ENCODE measurements at regions of chr9 and their contacts with region 1.

Region 1: DNA sequence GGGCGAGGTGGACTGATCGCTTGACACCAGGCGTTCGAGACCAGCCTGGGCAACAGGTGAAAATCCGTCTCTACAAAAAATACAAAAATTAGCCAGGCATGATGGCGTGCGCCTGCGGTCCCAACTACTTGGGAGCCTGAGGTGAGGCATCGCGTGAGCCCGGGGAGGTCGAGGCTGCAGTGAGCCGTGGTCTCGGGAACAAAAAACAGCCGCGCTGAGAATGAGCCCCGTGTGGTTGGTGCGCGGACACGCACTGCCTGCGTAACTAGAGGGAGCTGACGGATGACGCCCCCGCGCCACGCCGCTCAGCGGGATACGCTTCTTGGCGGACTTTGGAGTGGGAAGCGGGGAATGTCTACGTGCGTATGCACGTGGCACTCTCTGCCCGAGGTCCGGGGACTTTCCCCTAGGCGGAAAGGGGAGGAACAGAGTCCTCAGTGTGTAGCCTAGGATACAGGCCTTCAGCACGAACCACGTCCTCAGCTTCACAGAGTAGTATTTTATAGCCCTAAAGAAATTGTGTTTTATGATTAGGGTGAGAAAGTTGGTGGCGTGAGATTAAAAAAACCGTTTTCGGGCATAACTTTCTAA is at the start of gene RMRP:
- DNase-seq: peak; percentile 99
- H3K4me3 Mint-ChIP-seq: peak within 1 kb of the TSS; percentile 62
- H3K27ac Mint-ChIP-seq: peak within 1 kb of the TSS; percentile 100
- H3K4me1 Mint-ChIP-seq: peaks cover 21% of the 10 kb centered on the region
- H3K27me3 Mint-ChIP-seq: no peaks in the 10 kb centered on the region
- CTCF ChIP-seq: no peak
- total RNA-seq, gene RMRP: 13,245 and 17,503 TPM in 2 replicates

Region 2: DNA sequence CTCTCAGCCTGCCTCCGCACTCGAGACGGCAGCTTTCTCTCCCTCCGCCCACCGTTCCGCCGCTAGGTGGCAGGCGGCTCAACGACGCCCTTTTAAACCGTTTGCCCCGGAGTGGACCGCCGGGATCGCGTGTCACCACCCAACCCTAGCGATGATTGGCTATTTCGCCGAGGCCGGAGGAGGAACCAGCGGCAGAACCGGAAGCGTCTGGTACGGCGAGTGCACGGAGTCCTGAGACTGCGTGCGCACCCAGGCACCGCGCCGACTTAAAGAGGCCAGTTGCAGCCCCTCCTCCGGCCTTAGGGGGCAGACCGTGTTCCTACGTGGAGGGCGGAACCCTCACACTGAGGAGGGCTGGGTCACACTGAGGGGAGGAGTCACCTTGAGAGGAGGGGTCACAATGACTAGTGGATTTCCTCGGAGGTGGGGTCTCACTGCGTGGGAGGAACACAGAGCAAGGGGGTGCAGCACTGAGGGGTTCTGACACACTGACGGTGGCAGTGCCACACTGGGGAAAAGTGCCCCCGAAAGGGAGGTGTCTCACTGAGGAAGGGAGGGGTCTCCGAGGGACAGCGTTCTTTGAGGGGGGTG is 53.6 kb before region 1 on chr9:
- CTCF ChIA-PET with region 1: interaction called, 6 read pairs
- POLR2A ChIA-PET with region 1: interaction called, 15 read pairs
- intact Hi-C with region 1: loop called (anchors 5 kb)
- DNase-seq: peak; percentile 99
- H3K4me3 Mint-ChIP-seq: peak overlapping the region; percentile 97
- H3K27ac Mint-ChIP-seq: peak overlapping the region; percentile 99
- H3K4me1 Mint-ChIP-seq: peaks cover 28% of the 10 kb centered on the region
- H3K27me3 Mint-ChIP-seq: no peaks in the 10 kb centered on the region
- CTCF ChIP-seq: peak; percentile 69

Region 3: DNA sequence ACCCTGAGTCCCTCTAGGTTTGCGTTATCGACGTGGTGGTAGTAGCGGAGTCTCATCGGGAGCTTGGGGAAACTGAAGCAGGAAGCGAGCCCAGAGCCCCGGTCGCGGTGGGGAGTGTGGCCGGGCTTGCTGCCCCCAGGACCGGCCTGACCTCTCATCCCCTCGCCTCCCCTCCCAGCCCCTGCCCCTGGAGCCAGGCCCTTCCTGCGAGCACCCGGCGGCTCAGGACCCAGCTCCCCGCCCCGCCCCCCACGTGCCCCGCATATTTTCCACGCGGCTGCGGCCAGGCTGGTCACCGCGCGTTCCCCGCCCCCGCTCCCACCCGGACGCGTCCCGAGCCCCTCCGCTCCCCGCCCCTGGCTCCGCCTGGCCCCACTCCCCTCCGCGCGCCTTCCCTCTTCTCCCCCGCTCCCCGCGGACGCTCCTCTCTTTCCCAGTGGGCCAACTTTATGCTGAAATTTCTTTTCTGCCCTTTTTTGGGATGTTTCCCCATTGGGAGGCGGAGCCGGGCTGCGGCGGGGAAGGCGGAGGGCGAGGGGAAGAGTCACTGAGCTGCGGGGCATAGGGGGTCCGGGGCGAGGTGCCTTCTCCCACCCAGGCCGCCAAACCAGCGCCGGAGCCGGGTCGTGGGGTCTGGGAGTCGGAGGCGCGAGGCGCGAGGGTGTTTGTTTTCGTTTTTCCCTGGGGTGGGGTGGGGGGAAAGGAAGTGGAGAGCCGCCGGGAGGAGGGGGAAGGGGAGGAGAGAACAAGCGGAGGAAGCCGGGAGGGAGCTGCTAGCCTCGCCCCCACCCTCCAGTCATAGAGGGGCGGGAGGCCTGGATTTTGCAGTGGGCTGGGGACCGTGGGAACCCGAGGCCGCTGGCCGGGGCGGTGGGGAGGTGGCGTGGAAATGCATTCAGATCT is 33.0 kb after region 1 on chr9:
- CTCF ChIA-PET with region 1: interaction called, 30 read pairs
- POLR2A ChIA-PET with region 1: interaction called, 38 read pairs
- intact Hi-C with region 1: loop called (anchors 2 kb)
- DNase-seq: peak; percentile 52
- H3K4me3 Mint-ChIP-seq: peak overlapping the region; percentile 79
- H3K27ac Mint-ChIP-seq: peak overlapping the region; percentile 72
- H3K4me1 Mint-ChIP-seq: peaks cover 24% of the 10 kb centered on the region
- H3K27me3 Mint-ChIP-seq: no peaks in the 10 kb centered on the region
- CTCF ChIP-seq: no peak